ENCODE measurements at regions of chr20 and their contacts with region 1.

Region 1: GRCh38 chr20:47725248-47725973 is 59.9 kb downstream of the SULF2 start:
- DNase-seq: peak; percentile 55 to 92 (median 88)
- ATAC-seq: peak; percentile 75
- H3K4me3 ChIP-seq: no peak overlapping the region
- H3K4me3 Mint-ChIP-seq: peak overlapping the region in 1 of 10 donors; percentile 48
- H3K27ac ChIP-seq: peak overlapping the region; percentile 6
- H3K27ac Mint-ChIP-seq: peak overlapping the region in 8 of 9 donors; percentile 26 to 99 (median 94)
- H3K4me1 ChIP-seq: peaks cover 15 to 34% of the 10 kb centered on the region in 2 donors
- H3K4me1 Mint-ChIP-seq: peaks cover 39 to 51% (median 44%) of the 10 kb centered on the region in 7 donors
- H3K27me3 ChIP-seq: no peaks in the 10 kb centered on the region
- H3K27me3 Mint-ChIP-seq: peaks cover 0 to 2% (median 0%) of the 10 kb centered on the region in 5 donors

Region 2: DNA sequence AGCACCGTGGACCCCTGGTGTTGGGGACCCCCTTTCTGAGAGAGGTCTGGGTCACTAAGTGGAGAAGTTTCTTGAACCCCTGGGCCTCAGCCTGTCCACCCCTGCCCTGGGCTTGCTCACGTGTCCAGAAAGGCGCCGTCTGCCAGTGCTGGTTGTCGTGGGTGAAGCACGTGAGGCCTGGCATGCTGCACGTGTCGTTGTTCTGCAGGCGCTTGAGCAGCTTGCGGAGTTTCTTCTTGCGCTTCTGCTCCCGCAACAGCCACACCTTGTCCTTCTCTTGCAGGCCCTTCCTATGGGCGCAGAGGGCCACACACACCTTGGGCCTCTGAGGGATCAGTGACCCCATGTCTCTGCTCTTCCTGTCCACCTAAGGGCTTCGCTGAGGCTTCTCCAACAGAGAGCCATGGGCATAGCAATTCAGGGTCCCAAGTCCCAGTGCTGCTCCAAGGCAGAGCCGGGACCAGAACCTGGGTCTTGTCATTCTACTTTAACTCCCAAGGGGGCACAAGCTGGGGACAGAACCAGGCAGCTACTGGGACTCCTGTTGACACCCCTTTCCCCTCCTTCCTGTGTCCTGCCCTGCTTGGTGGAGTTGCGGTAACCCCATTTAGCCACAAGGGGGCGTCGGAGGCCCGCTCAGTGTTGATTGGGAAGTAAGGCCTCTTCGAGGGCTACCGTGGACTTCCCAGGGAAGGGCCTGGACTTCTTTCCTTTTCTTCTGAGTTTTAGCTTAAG is 61.9 kb before region 1 on chr20:
- CTCF ChIA-PET with region 1: no interaction called
- POLR2A ChIA-PET with region 1: no interaction called
- intact Hi-C with region 1: loop called in 1 of 2 experiments (anchors 1 kb)
- DNase-seq: peak; percentile 60 to 79 (median 70)
- ATAC-seq: peak; percentile 88
- H3K4me3 ChIP-seq: no peak overlapping the region
- H3K4me3 Mint-ChIP-seq: peak overlapping the region in 1 of 10 donors; percentile 11
- H3K27ac ChIP-seq: no peak overlapping the region
- H3K27ac Mint-ChIP-seq: peak overlapping the region in 4 of 9 donors; percentile 28 to 75 (median 53)
- H3K4me1 ChIP-seq: no peaks in the 10 kb centered on the region
- H3K4me1 Mint-ChIP-seq: peaks cover 3 to 11% (median 6%) of the 10 kb centered on the region in 7 donors
- H3K27me3 ChIP-seq: no peaks in the 10 kb centered on the region
- H3K27me3 Mint-ChIP-seq: no peaks in the 10 kb centered on the region

Region 3: GRCh38 chr20:47691625-47692024 is 33.8 kb before region 1 on chr20:
- CTCF ChIA-PET with region 1: no interaction called
- POLR2A ChIA-PET with region 1: no interaction called
- intact Hi-C with region 1: no loop called
- DNase-seq: no peak
- ATAC-seq: no peak
- H3K4me3 ChIP-seq: no peak overlapping the region
- H3K4me3 Mint-ChIP-seq: no peak overlapping the region
- H3K27ac ChIP-seq: no peak overlapping the region
- H3K27ac Mint-ChIP-seq: no peak overlapping the region
- H3K4me1 ChIP-seq: peaks cover 0 to 4% of the 10 kb centered on the region in 2 donors
- H3K4me1 Mint-ChIP-seq: peaks cover 4 to 13% (median 6%) of the 10 kb centered on the region in 7 donors
- H3K27me3 ChIP-seq: no peaks in the 10 kb centered on the region
- H3K27me3 Mint-ChIP-seq: peaks cover 4 to 11% (median 7%) of the 10 kb centered on the region in 5 donors

Region 4: GRCh38 chr20:47785854-47786764 is 60.7 kb after region 1 on chr20:
- CTCF ChIA-PET with region 1: no interaction called
- POLR2A ChIA-PET with region 1: interaction called, 3 read pairs
- intact Hi-C with region 1: loop called in 1 of 2 experiments (anchors 2 kb)
- DNase-seq: no peak
- ATAC-seq: peak; percentile 63
- H3K4me3 ChIP-seq: no peak overlapping the region
- H3K4me3 Mint-ChIP-seq: peak overlapping the region; percentile 51 to 87 (median 78)
- H3K27ac ChIP-seq: no peak overlapping the region
- H3K27ac Mint-ChIP-seq: peak overlapping the region in 1 of 9 donors; percentile 5
- H3K4me1 ChIP-seq: no peaks in the 10 kb centered on the region
- H3K4me1 Mint-ChIP-seq: peaks cover 7 to 23% (median 17%) of the 10 kb centered on the region in 7 donors
- H3K27me3 ChIP-seq: peaks cover 0 to 14% of the 10 kb centered on the region in 2 donors
- H3K27me3 Mint-ChIP-seq: peaks cover 64 to 77% (median 71%) of the 10 kb centered on the region in 5 donors

Region 5: DNA sequence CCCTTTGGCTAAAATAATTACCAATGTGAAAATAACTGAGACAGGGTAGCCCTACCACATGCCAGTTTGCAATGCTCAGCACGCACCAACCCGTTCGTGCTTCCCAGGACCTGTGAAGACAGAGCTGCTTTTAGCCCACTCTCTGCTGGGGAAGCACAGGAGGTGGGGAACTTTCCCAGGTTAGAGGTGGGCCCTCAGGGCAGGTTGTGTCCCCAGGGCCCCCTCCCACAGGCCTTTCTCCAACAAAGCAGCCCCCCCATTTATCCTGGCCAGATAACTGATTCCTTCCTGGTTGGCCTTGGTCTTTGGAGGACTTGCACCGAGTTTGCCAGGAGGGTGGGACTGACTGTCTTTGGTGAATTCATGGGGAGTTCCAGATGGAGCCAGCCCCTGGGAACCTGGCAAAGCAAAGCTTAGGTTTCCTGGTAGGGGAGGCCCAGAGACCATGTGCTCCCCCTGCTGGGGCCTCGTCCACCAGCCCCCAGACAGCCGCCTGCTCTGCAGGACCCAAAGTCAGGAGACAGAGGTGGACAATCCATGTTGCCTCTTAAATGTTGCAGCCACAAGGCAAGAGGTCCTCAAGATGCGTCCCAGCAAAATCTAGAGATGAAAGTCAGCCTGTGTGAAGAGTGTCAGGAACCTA is 604.3 kb after region 1 on chr20:
- CTCF ChIA-PET with region 1: interaction called, 3 read pairs
- POLR2A ChIA-PET with region 1: no interaction called
- intact Hi-C with region 1: loop called in 1 of 2 experiments (anchors 2 kb)
- DNase-seq: no peak
- ATAC-seq: no peak
- H3K4me3 ChIP-seq: no peak overlapping the region
- H3K4me3 Mint-ChIP-seq: no peak overlapping the region
- H3K27ac ChIP-seq: no peak overlapping the region
- H3K27ac Mint-ChIP-seq: no peak overlapping the region
- H3K4me1 ChIP-seq: no peaks in the 10 kb centered on the region
- H3K4me1 Mint-ChIP-seq: no peaks in the 10 kb centered on the region
- H3K27me3 ChIP-seq: peaks cover 0 to 3% of the 10 kb centered on the region in 2 donors
- H3K27me3 Mint-ChIP-seq: peaks cover 9 to 40% (median 24%) of the 10 kb centered on the region in 5 donors

Region 6: GRCh38 chr20:48620519-48621254 is 895.3 kb after region 1 on chr20:
- CTCF ChIA-PET with region 1: interaction called, 16 read pairs
- POLR2A ChIA-PET with region 1: no interaction called
- intact Hi-C with region 1: loop called (anchors 1 kb)
- DNase-seq: peak; percentile 41 to 78 (median 59)
- ATAC-seq: peak; percentile 90
- H3K4me3 ChIP-seq: peak overlapping the region; percentile 38
- H3K4me3 Mint-ChIP-seq: peak overlapping the region; percentile 64 to 86 (median 76)
- H3K27ac ChIP-seq: no peak overlapping the region
- H3K27ac Mint-ChIP-seq: peak overlapping the region in 3 of 9 donors; percentile 47 to 78 (median 51)
- H3K4me1 ChIP-seq: peaks cover 7 to 11% of the 10 kb centered on the region in 2 donors
- H3K4me1 Mint-ChIP-seq: peaks cover 5 to 16% (median 7%) of the 10 kb centered on the region in 7 donors
- H3K27me3 ChIP-seq: no peaks in the 10 kb centered on the region
- H3K27me3 Mint-ChIP-seq: no peaks in the 10 kb centered on the region

Measured in naive thymus-derived CD4-positive, alpha-beta T cell (primary cell).